ENCODE measurements at regions of chr11 and their contacts with region 1.

Region 1: GRCh38 chr11:1882519-1883238 is 9.0 kb downstream of the PRR33 start:
- DNase-seq: no peak
- H3K4me3 ChIP-seq: no peak overlapping the region
- CTCF ChIP-seq: peak; percentile 95

Region 2: DNA sequence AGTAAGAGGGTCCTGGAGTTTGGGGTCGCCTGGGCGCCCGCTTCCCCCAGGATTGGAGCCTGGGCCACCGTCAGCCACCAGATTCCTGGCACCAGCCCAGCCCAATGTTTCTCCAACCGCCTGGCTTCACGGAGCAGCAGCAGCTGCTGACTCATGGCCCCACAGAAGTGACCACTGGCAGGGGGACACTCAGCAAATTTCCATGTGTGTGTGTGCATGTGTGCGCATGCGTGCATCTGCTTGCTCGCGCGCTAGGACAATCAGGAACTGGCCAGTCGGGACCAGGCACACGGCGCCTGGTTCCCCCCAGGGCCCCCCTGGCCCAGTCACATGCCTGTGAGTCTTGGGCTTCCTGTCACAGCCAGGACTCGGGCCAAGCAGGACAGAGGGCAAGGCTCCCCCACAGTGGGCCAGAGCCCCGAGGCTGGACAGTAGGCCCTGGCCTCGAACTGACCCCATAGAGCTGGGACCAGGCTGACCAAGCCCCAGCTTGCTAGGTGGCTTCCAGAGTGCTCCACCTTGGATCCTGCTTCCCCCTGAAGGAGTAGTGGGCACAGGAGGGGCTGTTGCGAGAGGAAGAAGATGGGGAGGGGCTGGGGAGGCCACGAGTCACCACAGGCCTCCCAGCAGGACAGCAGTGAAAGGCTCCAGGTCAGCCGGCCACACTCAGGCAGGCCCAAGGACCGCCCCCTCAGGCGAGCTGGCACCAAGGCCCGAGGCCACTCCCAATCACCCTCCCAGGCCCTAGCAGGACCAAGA is 122.1 kb before region 1 on chr11:
- CTCF ChIA-PET with region 1: no interaction called
- POLR2A ChIA-PET with region 1: no interaction called
- DNase-seq: no peak
- H3K4me3 ChIP-seq: no peak overlapping the region
- CTCF ChIP-seq: no peak

Region 3: GRCh38 chr11:1863352-1864216 is 19.1 kb before region 1 on chr11:
- CTCF ChIA-PET with region 1: interaction called, 18 read pairs
- POLR2A ChIA-PET with region 1: no interaction called
- DNase-seq: peak; percentile 40
- H3K4me3 ChIP-seq: no peak overlapping the region
- CTCF ChIP-seq: no peak

Region 4: GRCh38 chr11:1896923-1897322 is 14.2 kb after region 1 on chr11:
- CTCF ChIA-PET with region 1: interaction called, 18 read pairs
- POLR2A ChIA-PET with region 1: no interaction called
- DNase-seq: no peak
- H3K4me3 ChIP-seq: no peak overlapping the region
- CTCF ChIP-seq: no peak

Region 5: GRCh38 chr11:1921574-1922141 is 39.0 kb after region 1 on chr11:
- CTCF ChIA-PET with region 1: interaction called, 27 read pairs
- POLR2A ChIA-PET with region 1: no interaction called
- DNase-seq: no peak
- H3K4me3 ChIP-seq: no peak overlapping the region
- CTCF ChIP-seq: no peak

Region 6: GRCh38 chr11:1946812-1947484 is 64.3 kb after region 1 on chr11 and contains the start of gene MRPL23:
- CTCF ChIA-PET with region 1: interaction called, 18 read pairs
- POLR2A ChIA-PET with region 1: no interaction called
- DNase-seq: no peak
- H3K4me3 ChIP-seq: no peak within 1 kb of the TSS
- CTCF ChIP-seq: no peak

Region 7: DNA sequence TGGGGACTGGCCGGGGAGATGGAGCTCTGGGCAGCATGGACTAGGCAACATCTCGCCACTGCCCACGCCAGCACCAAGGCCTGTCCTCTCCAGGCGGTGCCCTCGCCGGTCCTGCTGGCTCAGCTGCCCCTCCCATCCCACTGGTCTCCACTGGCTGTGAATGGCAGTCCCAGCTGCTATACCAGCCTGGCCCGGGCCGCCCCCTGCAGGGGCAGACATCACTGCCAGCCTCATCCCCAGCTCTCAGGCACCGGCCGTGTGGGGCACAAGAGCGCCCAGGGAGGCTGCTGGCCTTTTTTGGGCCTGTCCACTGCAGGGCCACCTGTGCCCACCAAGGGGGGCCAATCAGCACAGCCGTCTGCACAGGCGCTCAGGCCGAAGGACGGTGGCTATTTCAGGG is 145.0 kb after region 1 on chr11:
- CTCF ChIA-PET with region 1: interaction called, 12 read pairs
- POLR2A ChIA-PET with region 1: no interaction called
- DNase-seq: no peak
- H3K4me3 ChIP-seq: no peak overlapping the region
- CTCF ChIP-seq: no peak